ENCODE measurements at regions of chr1 and their contacts with region 1.

Region 1: GRCh38 chr1:113978863-113979702 is at the start of gene OLFML3:
- DNase-seq: peak; percentile 84 to 85
- H3K4me3 ChIP-seq: peak within 1 kb of the TSS; percentile 8 to 48 (median 20); a peak in 5 of 8 replicates
- H3K27ac ChIP-seq: peak within 1 kb of the TSS; percentile 86
- H3K4me1 ChIP-seq: peaks cover 14 to 51% (median 27%) of the 10 kb centered on the region in 4 experiments
- H3K27me3 ChIP-seq: no peaks in the 10 kb centered on the region; a peak in 1 of 7 replicates
- CTCF ChIP-seq: peak; percentile 74 to 82 (median 81)
- EP300 ChIP-seq: no peak
- POLR2A ChIP-seq: peak in 1 of 2 experiments; percentile 50; a peak in 1 of 3 replicates
- RAD21 ChIP-seq: peak; percentile 89 to 92
- total RNA-seq, gene OLFML3: 55.3 and 56.0 TPM in 2 replicates

Region 2: GRCh38 chr1:113811888-113812660 is 167.0 kb before region 1 on chr1 and contains the start of gene RSBN1:
- CTCF ChIA-PET with region 1: no interaction called
- POLR2A ChIA-PET with region 1: no interaction called
- DNase-seq: peak; percentile 94 to 96
- H3K4me3 ChIP-seq: peak within 1 kb of the TSS; percentile 85 to 99 (median 92)
- H3K27ac ChIP-seq: peak within 1 kb of the TSS; percentile 65
- H3K4me1 ChIP-seq: no peaks in the 10 kb centered on the region
- H3K27me3 ChIP-seq: no peaks in the 10 kb centered on the region
- CTCF ChIP-seq: no peak
- EP300 ChIP-seq: 0 out of 3 replicates have a peak, but pooled peaks of 1 of the 2 experiments have one; percentile 25
- POLR2A ChIP-seq: peak in 1 of 2 experiments; percentile 82; a peak in 2 of 3 replicates
- RAD21 ChIP-seq: no peak; a peak in 1 of 4 replicates
- total RNA-seq, gene RSBN1: 16.4 and 17.6 TPM in 2 replicates

Region 3: GRCh38 chr1:113868387-113869083 is 110.5 kb before region 1 on chr1:
- CTCF ChIA-PET with region 1: no interaction called
- POLR2A ChIA-PET with region 1: no interaction called
- DNase-seq: no peak
- H3K4me3 ChIP-seq: no peak overlapping the region
- H3K27ac ChIP-seq: no peak overlapping the region
- H3K4me1 ChIP-seq: no peaks in the 10 kb centered on the region
- H3K27me3 ChIP-seq: no peaks in the 10 kb centered on the region
- CTCF ChIP-seq: no peak
- EP300 ChIP-seq: no peak
- POLR2A ChIP-seq: no peak
- RAD21 ChIP-seq: no peak

Region 4: DNA sequence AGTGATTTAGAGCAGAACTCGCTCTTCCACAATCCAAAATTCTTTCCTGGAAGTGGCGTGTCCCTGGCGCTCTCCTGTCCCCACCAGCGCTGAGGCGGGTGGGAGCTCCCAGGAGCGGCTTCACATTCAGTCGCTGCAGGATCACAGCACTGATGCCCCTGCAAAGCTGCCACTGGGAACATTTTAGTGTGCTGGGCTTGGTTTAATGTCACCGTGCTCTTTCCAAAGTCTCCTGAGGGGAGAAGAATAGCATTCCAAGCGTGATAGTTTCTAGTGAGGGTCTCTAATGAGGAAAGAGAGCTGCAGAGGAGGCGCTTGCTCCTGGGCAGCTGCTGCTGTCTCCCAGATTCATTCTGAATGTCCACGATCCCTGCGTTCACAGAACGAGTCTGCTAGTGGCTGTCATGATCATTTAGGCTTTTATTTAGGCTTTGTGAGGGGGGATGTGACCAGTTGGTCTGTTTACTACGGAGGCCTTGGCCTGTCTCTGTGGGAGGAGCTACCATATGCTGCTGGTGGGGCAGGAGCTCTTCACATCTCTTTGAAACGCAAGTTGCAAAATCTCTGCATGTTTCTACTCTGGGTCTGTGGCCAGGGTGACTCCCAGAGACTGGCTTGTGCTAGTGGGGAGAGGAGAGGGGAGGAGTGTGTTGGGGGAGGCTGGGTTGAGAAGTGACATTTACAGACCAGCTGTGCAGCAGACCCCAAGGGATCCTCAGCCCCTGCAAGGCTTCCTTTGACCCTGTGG is 23.6 kb after region 1 on chr1:
- CTCF ChIA-PET with region 1: interaction called, 23 read pairs
- POLR2A ChIA-PET with region 1: no interaction called
- DNase-seq: no peak
- H3K4me3 ChIP-seq: no peak overlapping the region
- H3K27ac ChIP-seq: no peak overlapping the region; the same call in 1 of the 2 replicates
- H3K4me1 ChIP-seq: peaks cover 7 to 16% (median 12%) of the 10 kb centered on the region in 4 experiments
- H3K27me3 ChIP-seq: no peaks in the 10 kb centered on the region
- CTCF ChIP-seq: no peak
- EP300 ChIP-seq: no peak
- POLR2A ChIP-seq: no peak
- RAD21 ChIP-seq: no peak

Region 5: DNA sequence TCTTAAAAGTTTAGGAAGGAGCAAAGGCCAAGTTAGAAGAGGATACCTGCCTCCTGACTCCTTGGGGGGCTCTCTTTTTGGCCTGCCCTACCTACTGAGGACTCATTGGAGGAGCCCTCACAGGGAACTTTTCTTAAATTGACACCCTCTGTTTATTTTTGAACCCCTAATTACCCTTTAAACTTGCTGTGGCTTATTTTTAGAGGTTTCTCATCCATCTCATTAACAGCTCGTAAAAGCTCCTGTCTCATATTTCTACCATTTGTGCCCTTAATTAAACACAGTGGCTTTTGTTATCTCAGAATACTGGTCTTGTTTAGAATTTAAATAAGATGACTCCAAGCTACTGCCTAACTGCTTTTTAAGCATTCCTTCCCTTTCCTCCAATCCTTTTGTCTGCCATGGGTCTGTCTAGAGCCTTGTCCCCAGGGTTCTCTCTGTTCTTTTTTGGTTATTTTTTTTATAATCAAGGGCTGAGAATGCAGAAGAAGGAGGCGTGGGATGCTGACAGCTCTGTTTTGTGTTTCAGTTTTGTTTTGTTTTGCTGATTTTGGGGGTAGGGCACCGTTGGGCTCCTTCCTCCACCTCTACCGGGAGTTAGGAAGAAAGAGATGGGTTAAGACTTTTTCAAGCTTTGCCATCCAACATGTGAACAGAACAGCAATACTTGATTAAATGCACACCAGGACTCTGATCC is 96.6 kb after region 1 on chr1:
- CTCF ChIA-PET with region 1: interaction called, 13 read pairs
- POLR2A ChIA-PET with region 1: no interaction called
- DNase-seq: peak in 1 of 2 experiments; percentile 29
- H3K4me3 ChIP-seq: peak overlapping the region in 1 of 4 experiments; percentile 13; a peak in 1 of 8 replicates
- H3K27ac ChIP-seq: peak overlapping the region; percentile 63; the same call in 1 of the 2 replicates
- H3K4me1 ChIP-seq: peaks cover 17 to 42% (median 32%) of the 10 kb centered on the region in 4 experiments
- H3K27me3 ChIP-seq: no peaks in the 10 kb centered on the region
- CTCF ChIP-seq: no peak
- EP300 ChIP-seq: no peak
- POLR2A ChIP-seq: no peak
- RAD21 ChIP-seq: no peak

Region 6: GRCh38 chr1:114139540-114140244 is 160.6 kb after region 1 on chr1:
- CTCF ChIA-PET with region 1: interaction called, 10 read pairs
- POLR2A ChIA-PET with region 1: no interaction called
- DNase-seq: no peak
- H3K4me3 ChIP-seq: no peak overlapping the region
- H3K27ac ChIP-seq: no peak overlapping the region
- H3K4me1 ChIP-seq: peaks cover 0 to 2% (median under 1%) of the 10 kb centered on the region in 4 experiments; a peak in 1 of 7 replicates
- H3K27me3 ChIP-seq: no peaks in the 10 kb centered on the region
- CTCF ChIP-seq: no peak
- EP300 ChIP-seq: no peak
- POLR2A ChIP-seq: no peak
- RAD21 ChIP-seq: no peak

Region 7: DNA sequence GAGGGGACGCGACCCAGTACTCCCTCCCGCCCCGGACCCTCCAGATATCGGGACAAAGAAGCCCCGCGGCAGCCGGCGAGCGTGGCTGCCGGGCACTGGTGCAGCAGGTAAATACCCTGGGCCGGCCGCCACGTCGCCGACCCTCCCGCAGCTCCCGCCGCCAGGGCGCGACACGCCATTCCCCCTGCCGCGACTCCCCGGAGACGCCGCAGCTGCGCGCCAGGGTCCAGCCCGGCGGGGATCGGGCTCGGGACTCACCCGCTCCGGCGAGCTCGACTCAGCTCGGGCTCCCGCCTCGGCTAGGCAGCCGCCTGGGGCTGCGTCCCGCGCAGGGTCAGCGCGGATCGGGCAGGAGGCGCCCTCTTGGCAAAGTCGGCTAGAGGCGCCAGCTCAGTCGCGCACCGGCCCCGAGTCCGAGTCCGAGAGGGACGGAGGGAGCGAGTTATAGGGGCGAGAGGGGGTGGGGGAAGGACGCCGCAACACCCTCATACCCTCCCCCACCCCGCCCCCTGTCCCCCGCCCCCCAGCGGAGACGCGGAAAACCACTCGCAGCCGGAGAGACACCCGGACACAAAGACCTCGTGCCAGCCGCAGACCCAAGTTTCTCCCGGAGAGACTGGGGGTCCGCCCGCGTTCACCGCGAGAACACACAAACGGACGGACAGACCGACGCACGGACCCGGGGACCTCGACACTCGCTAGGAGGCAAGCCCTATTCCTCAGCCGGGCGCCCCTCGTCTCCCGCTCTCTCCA is 173.6 kb after region 1 on chr1:
- CTCF ChIA-PET with region 1: interaction called, 12 read pairs
- POLR2A ChIA-PET with region 1: interaction called, 5 read pairs
- DNase-seq: peak in 1 of 2 experiments; percentile 71
- H3K4me3 ChIP-seq: peak overlapping the region; percentile 79 to 85 (median 82)
- H3K27ac ChIP-seq: no peak overlapping the region
- H3K4me1 ChIP-seq: peaks cover 9 to 45% (median 22%) of the 10 kb centered on the region in 4 experiments
- H3K27me3 ChIP-seq: peaks cover 0 to 22% (median 20%) of the 10 kb centered on the region in 4 experiments; a peak in 6 of 7 replicates
- CTCF ChIP-seq: no peak
- EP300 ChIP-seq: no peak
- POLR2A ChIP-seq: no peak
- RAD21 ChIP-seq: 0 out of 4 replicates have a peak, but pooled peaks of 1 of the 2 experiments have one; percentile 4

Region 8: GRCh38 chr1:114346480-114347029 is 367.5 kb after region 1 on chr1:
- CTCF ChIA-PET with region 1: interaction called, 12 read pairs
- POLR2A ChIA-PET with region 1: interaction called, 3 read pairs
- DNase-seq: peak; percentile 92 to 100
- H3K4me3 ChIP-seq: peak overlapping the region; percentile 8 to 56 (median 25); a peak in 6 of 8 replicates
- H3K27ac ChIP-seq: no peak overlapping the region
- H3K4me1 ChIP-seq: peaks cover 0 to 10% (median 5%) of the 10 kb centered on the region in 4 experiments; a peak in 4 of 7 replicates
- H3K27me3 ChIP-seq: peaks cover 0 to 9% (median 3%) of the 10 kb centered on the region in 4 experiments; a peak in 2 of 7 replicates
- CTCF ChIP-seq: peak; percentile 100
- EP300 ChIP-seq: no peak
- POLR2A ChIP-seq: no peak
- RAD21 ChIP-seq: peak; percentile 99 to 100

Measured in H1 (cell line).